Breast epithelium (tissue), 4 donors: ENCODE measurements at regions of chr5 and their contacts with region 1.

Region 1: DNA sequence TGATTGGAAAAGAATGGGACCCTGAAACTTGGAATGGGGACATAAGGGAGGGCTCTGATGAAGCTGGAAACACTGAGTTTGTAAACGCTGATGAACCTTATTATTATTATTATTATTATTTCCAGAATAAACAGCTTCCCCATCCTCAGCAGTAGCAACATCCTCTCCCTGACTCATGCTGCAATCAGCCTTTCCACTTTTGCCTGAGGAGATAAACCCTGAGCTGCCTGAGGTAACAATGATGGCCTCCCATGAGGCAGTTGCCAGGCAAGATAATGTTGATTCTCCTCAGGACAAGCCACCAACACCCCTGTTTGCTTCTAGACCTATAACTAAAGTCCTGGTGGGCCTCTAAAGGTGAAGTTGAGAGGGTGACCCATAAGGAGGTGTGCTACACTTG is 139.2 kb upstream of the ATP10B start:
- DNase-seq: no peak
- H3K4me3 ChIP-seq: no peak overlapping the region
- H3K27ac ChIP-seq: no peak overlapping the region
- H3K4me1 ChIP-seq: no peaks in the 10 kb centered on the region
- H3K27me3 ChIP-seq: no peaks in the 10 kb centered on the region
- CTCF ChIP-seq: no peak
- POLR2A ChIP-seq: no peak

Region 2: GRCh38 chr5:160333721-160334120 is 657.5 kb before region 1 on chr5:
- intact Hi-C with region 1: loop called (anchors 5 kb)
- DNase-seq: no peak
- H3K4me3 ChIP-seq: no peak overlapping the region
- H3K27ac ChIP-seq: no peak overlapping the region
- H3K4me1 ChIP-seq: no peaks in the 10 kb centered on the region
- H3K27me3 ChIP-seq: no peaks in the 10 kb centered on the region
- CTCF ChIP-seq: no peak
- POLR2A ChIP-seq: no peak

Region 3: GRCh38 chr5:160957312-160957861 is 33.8 kb before region 1 on chr5:
- intact Hi-C with region 1: no loop called
- DNase-seq: no peak
- H3K4me3 ChIP-seq: no peak overlapping the region
- H3K27ac ChIP-seq: no peak overlapping the region
- H3K4me1 ChIP-seq: no peaks in the 10 kb centered on the region
- H3K27me3 ChIP-seq: no peaks in the 10 kb centered on the region
- CTCF ChIP-seq: no peak
- POLR2A ChIP-seq: no peak